PC-9 (cell line): ENCODE measurements at regions of chr5 and their contacts with region 1.

Region 1: GRCh38 chr5:160342403-160342941 is 28.0 kb downstream of the C1QTNF2 start:
- DNase-seq: peak; percentile 31 to 41
- H3K4me3 ChIP-seq: no peak overlapping the region
- H3K27ac ChIP-seq: no peak overlapping the region
- H3K4me1 ChIP-seq: 0 out of 2 replicates have a peak, but pooled peaks cover 6% of the 10 kb centered on the region
- H3K27me3 ChIP-seq: no peaks in the 10 kb centered on the region
- CTCF ChIP-seq: no peak

Region 2: DNA sequence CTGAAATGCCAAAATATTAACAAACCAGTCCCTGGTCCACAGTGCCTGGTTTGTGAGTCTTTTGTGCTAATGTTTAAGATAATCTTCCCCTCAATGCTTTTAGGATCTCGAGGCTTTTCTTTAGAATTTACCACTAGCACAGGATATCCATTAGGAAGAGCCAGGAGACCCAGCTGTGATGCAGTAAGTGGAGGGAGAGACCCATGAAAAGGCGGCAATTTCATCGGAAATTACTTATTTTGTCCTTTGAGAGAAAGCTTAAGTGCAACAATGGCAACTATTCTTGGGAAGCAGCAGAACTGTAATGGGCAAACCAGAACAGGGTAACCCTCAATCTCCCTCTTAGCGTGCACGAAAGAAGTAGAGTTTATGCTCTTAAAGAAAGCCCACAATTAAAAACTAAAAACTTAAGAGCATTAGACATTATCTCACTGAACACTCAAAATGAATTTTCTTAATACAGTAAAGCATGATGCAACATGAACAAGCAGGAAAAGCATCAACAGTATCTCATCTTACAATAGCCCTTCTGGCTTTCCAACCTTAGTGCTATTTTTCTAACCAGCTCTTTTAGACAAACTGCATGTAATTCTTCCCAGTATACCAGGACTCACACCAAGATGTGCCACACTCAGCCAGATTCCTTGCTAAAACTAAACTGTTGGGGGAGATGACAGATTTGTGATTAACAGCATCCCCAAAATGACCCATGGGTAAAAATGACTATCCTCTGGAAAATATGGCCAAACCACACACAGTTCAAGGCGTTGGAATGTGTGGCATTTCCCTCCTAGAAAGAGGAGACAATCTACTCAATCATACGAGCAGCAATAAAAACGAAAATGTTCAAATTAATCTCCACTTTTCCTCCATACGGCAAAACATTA is 259.6 kb before region 1 on chr5:
- CTCF ChIA-PET with region 1: no interaction called
- POLR2A ChIA-PET with region 1: no interaction called
- intact Hi-C with region 1: loop called (anchors 2 kb)
- DNase-seq: peak; percentile 22 to 49
- H3K4me3 ChIP-seq: no peak overlapping the region
- H3K27ac ChIP-seq: no peak overlapping the region
- H3K4me1 ChIP-seq: peaks cover 7% of the 10 kb centered on the region
- H3K27me3 ChIP-seq: no peaks in the 10 kb centered on the region
- CTCF ChIP-seq: no peak

Region 3: DNA sequence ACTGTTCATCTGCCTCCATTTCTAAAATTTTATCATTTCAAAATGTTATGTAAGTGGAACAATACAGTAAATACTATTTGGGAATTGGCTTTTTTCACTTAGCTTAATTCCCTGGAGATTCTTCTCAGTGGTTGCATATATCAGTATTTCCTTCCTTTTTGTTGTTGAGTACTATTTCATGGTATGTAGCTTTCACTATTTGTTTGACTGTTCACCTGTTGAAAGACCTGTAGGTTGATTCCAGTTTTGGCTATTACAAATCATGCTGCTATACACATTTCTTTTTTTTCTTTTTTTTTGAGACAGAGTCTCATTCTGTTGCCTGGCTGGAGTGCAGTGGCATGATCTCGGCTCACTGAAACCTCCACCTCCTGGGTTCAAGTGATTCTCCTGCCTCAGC is 190.2 kb before region 1 on chr5:
- CTCF ChIA-PET with region 1: no interaction called
- POLR2A ChIA-PET with region 1: no interaction called
- intact Hi-C with region 1: no loop called
- DNase-seq: no peak
- H3K4me3 ChIP-seq: no peak overlapping the region
- H3K27ac ChIP-seq: no peak overlapping the region
- H3K4me1 ChIP-seq: peaks cover 16% of the 10 kb centered on the region
- H3K27me3 ChIP-seq: no peaks in the 10 kb centered on the region
- CTCF ChIP-seq: no peak

Region 4: DNA sequence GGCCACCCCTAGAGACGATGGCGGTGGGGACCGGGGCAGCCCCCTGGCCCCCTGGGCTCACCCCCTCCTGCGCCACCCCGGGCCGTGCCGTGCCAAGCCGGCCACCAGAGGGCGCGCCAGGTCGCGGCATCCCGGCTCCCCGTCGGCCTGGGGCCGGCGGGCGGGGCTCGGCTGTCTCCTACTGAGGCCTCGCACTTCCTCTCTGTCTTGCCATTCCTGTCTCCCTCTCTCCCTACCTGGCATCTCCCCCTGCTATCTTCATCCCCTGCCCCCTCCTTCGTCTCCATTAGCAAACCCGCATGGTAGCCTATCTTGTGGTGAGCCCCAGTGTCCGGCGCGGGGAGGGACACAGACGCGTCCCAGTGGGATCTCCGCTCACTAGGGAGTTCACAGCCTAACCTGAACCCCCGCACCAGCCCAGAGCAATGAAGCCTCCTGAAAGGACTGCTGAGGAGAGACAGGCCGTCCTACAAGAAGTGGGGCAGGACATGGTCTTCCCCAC is 143.0 kb before region 1 on chr5:
- CTCF ChIA-PET with region 1: interaction called, 6 read pairs
- POLR2A ChIA-PET with region 1: no interaction called
- intact Hi-C with region 1: loop called (anchors 1 kb)
- DNase-seq: peak in 1 of 2 experiments; percentile 84
- H3K4me3 ChIP-seq: peak overlapping the region; percentile 35; the same call in 1 of the 2 replicates
- H3K27ac ChIP-seq: no peak overlapping the region
- H3K4me1 ChIP-seq: no peaks in the 10 kb centered on the region
- H3K27me3 ChIP-seq: no peaks in the 10 kb centered on the region
- CTCF ChIP-seq: peak; percentile 85

Region 5: DNA sequence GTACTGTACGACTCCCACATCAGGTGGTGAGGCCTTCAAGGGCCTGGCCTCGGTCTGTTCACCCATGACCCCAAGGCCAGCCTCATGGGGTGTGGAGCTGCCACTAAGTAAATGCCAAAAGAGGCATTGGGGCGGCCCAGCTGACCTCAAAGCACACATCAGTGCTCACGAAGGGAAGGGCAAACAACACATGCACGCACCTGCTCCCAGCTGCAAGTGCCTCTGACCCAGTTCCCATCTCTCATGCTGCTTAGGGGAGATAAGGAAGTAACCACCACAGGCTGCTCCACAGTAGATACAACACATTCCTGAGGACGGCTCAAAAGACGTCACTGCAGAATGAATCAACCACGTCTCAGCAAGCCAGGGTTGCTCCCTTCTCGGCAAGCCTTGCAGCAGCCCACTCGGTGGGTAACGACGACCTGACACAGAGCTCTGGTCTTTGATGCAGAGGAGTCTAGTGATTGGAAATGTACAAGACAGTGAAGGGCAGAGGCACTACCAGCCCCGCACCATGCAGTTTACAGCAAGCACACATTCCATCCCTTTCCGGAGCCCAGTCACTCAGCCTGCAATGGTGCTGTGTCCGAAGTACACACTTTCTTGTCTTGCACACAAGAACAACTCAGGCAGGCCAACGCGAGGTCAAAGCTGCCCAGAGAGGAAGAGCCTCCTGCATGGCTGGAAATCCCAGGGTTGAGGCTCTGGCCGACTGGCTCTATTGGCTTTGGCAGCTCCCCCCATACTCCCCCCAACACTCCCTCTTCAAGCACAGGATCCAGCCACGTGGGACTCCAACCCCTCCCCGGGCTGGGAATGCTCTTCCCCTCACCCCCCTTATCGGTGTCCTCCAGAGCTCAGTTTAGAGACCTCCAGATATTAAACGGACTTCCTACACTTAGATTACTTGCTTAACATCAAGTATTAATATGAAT is 81.3 kb before region 1 on chr5:
- CTCF ChIA-PET with region 1: interaction called, 5 read pairs
- POLR2A ChIA-PET with region 1: interaction called, 6 read pairs
- intact Hi-C with region 1: loop called (anchors 1 kb)
- DNase-seq: peak; percentile 84 to 99
- H3K4me3 ChIP-seq: no peak overlapping the region
- H3K27ac ChIP-seq: peak overlapping the region; percentile 79
- H3K4me1 ChIP-seq: peaks cover 18% of the 10 kb centered on the region
- H3K27me3 ChIP-seq: no peaks in the 10 kb centered on the region
- CTCF ChIP-seq: no peak

Region 6: GRCh38 chr5:160271396-160271795 is 71.1 kb before region 1 on chr5:
- CTCF ChIA-PET with region 1: no interaction called
- POLR2A ChIA-PET with region 1: no interaction called
- intact Hi-C with region 1: no loop called
- DNase-seq: no peak
- H3K4me3 ChIP-seq: no peak overlapping the region
- H3K27ac ChIP-seq: no peak overlapping the region
- H3K4me1 ChIP-seq: peaks cover 11% of the 10 kb centered on the region
- H3K27me3 ChIP-seq: no peaks in the 10 kb centered on the region
- CTCF ChIP-seq: no peak

Region 7: DNA sequence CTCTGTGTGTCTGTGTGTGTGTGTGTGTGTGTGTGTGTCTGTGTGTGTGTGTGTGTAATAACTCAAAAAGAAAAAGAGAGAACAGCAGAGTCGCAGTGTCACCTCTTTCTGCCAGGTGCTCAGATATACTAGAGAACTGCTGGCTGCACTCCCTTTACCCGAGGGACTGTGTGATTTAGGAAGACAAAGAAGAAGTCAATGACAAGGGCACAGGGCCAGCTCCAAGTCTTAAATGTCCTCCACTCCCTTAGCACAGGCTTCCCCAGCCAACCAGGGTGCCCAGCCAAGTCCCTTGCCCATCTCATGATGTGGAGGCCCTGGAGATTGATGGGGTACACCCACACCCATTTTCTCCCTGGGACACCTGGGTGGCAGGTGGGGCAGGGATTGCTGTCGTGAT is 38.8 kb before region 1 on chr5:
- CTCF ChIA-PET with region 1: interaction called, 7 read pairs
- POLR2A ChIA-PET with region 1: no interaction called
- intact Hi-C with region 1: loop called (anchors 2 kb)
- DNase-seq: no peak
- H3K4me3 ChIP-seq: no peak overlapping the region
- H3K27ac ChIP-seq: no peak overlapping the region
- H3K4me1 ChIP-seq: no peaks in the 10 kb centered on the region
- H3K27me3 ChIP-seq: no peaks in the 10 kb centered on the region
- CTCF ChIP-seq: no peak

Region 8: GRCh38 chr5:160390787-160391696 is 48.6 kb after region 1 on chr5:
- CTCF ChIA-PET with region 1: no interaction called
- POLR2A ChIA-PET with region 1: no interaction called
- intact Hi-C with region 1: loop called (anchors 2 kb)
- DNase-seq: no peak
- H3K4me3 ChIP-seq: no peak overlapping the region
- H3K27ac ChIP-seq: no peak overlapping the region
- H3K4me1 ChIP-seq: no peaks in the 10 kb centered on the region
- H3K27me3 ChIP-seq: no peaks in the 10 kb centered on the region
- CTCF ChIP-seq: peak; percentile 74